ENCODE measurements at regions of chr14 and their contacts with region 1.

Region 1: GRCh38 chr14:52918486-52918885 is 32.4 kb downstream of the FERMT2 start:
- DNase-seq: peak; percentile 47
- H3K4me3 Mint-ChIP-seq: no peak overlapping the region
- H3K27ac Mint-ChIP-seq: peak overlapping the region; percentile 50
- H3K4me1 Mint-ChIP-seq: peaks cover 17% of the 10 kb centered on the region
- H3K27me3 Mint-ChIP-seq: no peaks in the 10 kb centered on the region

Region 2: GRCh38 chr14:52741865-52742264 is 176.6 kb before region 1 on chr14:
- CTCF ChIA-PET with region 1: no interaction called
- intact Hi-C with region 1: loop called (anchors 5 kb)
- DNase-seq: no peak
- H3K4me3 Mint-ChIP-seq: peak overlapping the region; percentile 68
- H3K27ac Mint-ChIP-seq: peak overlapping the region; percentile 95
- H3K4me1 Mint-ChIP-seq: peaks cover 63% of the 10 kb centered on the region
- H3K27me3 Mint-ChIP-seq: no peaks in the 10 kb centered on the region

Region 3: DNA sequence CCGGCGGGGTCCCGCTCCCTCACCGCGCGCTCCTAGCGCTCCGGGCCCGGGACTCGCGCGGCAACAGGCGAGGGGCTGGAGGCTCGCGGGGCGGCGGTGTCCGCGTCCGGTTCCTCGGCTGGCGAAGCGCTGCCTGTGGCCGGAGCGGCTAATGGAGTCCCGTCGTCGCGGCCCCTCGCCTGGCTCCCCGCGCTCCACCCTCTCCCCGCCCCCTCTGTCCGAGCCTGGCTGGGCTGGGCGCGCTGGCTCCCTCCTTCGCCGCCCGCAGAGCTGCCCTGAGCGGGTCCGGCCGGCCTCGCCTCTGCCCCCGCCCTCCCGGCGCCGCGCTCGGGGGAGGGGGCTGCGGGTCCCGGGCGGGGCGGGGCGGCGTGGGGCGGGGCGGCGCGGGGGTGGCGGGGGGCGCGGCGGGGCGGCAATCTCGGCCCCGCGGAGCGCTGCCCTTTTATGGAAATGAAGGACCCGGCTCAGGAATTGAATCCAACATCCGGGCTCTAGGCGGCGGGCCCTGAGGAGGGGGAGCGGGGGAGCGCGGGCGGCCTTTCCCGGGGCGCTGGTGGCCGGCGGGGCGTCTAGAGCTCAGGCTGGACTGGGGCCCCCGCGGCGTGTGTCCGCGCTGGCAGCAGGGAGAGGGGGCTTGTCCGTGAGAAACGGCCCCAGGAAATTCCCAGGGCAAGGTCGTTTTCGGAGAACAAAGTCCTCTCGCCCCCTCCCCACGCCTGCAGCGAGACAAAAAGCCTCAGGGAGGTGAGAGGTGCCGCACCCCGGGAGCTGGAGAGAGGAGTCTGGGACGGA is 32.6 kb after region 1 on chr14 and contains the start of gene FERMT2:
- CTCF ChIA-PET with region 1: no interaction called
- intact Hi-C with region 1: loop called (anchors 1 kb)
- DNase-seq: peak; percentile 25
- H3K4me3 Mint-ChIP-seq: peak within 1 kb of the TSS; percentile 83
- H3K27ac Mint-ChIP-seq: no peak within 1 kb of the TSS
- H3K4me1 Mint-ChIP-seq: peaks cover 31% of the 10 kb centered on the region
- H3K27me3 Mint-ChIP-seq: peaks cover 49% of the 10 kb centered on the region
- total RNA-seq, gene FERMT2: 2.8 to 3.0 TPM

Region 4: DNA sequence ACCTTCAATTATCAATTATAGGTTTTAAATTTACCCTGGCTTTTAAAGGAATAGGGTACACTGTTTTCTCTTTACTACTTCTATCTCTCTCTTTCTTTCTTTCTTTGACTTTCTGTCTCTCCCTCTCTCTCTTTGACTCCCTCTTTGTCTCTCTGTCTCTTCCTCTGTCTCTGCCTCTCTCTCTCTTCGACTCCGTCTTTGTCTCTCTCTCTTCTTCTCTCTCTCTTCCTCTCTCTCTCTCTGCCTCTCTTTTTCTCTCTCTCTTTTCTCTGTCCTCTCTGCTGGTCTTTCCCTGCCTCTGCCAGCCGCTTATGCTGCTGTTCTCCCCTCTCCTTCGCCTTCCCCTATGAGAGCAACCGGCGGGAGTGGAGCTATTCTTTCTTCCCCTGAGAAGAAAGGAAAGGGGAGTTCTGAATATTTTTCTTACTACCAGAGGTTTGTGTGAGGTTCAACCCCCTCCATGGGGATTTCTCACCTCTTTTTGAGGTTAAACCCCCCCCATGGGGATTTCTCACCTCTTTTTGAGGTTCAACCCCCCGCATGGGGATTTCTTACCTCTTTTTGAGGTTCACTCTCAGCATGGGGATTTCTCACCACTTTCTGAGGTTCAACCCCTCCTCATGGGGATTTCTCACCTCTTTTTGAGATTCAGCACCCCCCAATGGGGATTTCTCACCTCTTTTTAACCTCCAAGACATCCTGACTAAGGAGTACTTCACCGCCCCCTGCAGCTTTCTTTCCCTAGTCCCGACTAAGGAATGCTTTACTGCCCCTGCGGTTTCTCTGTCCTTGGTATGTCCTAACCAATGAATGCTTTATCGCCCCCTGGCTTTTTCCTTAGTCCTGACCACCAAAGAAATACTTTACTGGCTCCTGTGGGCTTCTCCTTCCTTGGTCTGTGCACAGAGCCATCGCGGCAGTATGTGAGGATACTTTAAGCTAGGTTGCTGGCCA is 262.1 kb after region 1 on chr14:
- CTCF ChIA-PET with region 1: no interaction called
- intact Hi-C with region 1: loop called (anchors 1 kb)
- DNase-seq: peak; percentile 86
- H3K4me3 Mint-ChIP-seq: no peak overlapping the region
- H3K27ac Mint-ChIP-seq: peak overlapping the region; percentile 43
- H3K4me1 Mint-ChIP-seq: peaks cover 21% of the 10 kb centered on the region
- H3K27me3 Mint-ChIP-seq: no peaks in the 10 kb centered on the region

Region 5: DNA sequence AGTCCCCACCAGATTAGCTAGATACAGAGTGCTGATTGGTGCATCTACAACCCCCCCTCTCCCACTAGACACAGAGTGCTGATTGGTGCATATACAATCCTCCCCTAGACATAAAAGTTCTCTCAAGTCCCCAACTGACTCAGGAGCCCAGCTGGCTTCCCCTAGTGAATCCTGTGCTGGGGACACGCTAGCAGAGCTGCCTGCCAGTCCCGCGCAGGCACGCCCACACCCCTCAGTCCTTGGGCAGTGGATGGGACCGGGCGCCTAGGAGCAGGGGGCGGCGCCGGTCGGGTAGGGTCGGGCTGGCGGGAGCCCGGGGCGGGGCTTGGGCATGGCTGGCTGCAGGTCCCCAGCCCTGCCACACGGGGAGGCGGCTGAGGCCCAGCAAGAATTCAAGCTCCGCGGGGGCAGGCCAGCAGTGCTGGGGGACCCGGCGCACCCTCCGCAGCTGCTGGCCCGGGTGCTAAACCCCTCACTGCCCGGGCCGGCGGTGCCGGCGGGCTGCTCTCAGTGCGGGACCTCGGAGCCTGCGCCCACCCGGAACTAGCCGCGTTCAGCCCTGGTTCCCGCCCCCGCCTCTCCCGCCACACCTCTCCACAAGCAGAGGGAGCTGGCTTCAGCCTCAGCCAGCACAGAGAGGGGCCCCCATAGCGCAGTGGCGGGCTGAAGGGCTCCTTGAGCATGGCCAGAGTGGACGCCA is 299.0 kb after region 1 on chr14:
- CTCF ChIA-PET with region 1: no interaction called
- intact Hi-C with region 1: loop called (anchors 1 kb)
- DNase-seq: peak; percentile 79
- H3K4me3 Mint-ChIP-seq: peak overlapping the region; percentile 78
- H3K27ac Mint-ChIP-seq: peak overlapping the region; percentile 65
- H3K4me1 Mint-ChIP-seq: peaks cover 8% of the 10 kb centered on the region
- H3K27me3 Mint-ChIP-seq: no peaks in the 10 kb centered on the region